Caco-2 (cell line): ENCODE measurements at regions of chr10 and their contacts with region 1.

Region 1: GRCh38 chr10:97928897-97929296 is 79.3 kb downstream of the GOLGA7B start:
- DNase-seq: no peak
- H3K4me3 ChIP-seq: no peak overlapping the region
- H3K4me3 Mint-ChIP-seq: no peak overlapping the region
- H3K27ac Mint-ChIP-seq: no peak overlapping the region
- H3K4me1 ChIP-seq: no peaks in the 10 kb centered on the region
- H3K4me1 Mint-ChIP-seq: no peaks in the 10 kb centered on the region
- H3K27me3 ChIP-seq: peaks cover 1% of the 10 kb centered on the region
- H3K27me3 Mint-ChIP-seq: peaks cover 43% of the 10 kb centered on the region
- CTCF ChIP-seq: no peak

Region 2: DNA sequence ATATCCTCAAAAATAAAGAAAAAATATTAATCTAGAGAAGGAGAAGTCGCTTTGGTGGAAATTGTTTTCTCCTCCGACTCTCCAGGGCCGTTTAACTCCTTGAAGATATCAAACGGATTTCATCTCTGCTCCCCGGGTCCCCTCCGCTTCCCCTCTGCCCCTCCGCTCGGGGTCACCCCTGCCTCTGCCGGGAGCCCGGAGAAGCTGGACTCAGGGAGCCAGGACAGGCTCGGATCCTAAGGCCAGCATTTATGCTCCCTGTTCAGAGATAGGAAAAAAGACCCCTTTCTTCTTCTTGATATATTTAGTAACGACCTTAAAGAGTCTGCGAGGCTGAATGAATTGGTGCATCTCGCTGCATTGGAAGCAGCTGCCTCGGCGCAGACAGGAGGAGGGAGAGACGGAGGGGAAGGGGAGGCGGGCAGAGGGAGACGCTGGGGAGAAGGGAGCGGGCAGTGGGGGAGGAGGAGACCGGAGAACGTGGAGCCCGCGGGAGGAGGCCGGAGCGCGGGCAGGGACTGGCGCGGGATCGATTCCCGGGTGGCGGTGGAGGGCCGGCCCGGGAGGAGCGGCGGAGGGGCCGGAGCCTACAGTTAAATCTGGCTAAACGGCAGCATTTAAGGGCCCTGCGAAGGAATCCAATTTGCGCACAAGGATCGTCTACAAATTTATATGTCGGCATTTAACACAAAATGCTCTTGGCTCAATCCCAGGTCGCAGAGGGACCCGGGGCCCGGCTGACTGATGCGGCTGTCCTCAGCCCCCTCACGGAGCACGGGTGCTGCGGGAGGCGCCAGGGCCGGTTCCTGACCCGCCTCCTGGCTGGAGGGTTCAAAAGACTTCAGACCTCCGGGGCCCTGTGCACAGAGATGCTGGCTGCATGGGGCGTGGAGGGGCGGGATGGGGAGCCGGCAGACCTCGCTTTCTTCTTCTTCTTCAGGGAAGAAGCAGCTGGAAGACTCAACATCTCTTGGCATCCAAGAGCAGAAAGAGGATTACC is 45.9 kb after region 1 on chr10:
- CTCF ChIA-PET with region 1: no interaction called
- POLR2A ChIA-PET with region 1: no interaction called
- intact Hi-C with region 1: loop called (anchors 1 kb)
- DNase-seq: no peak
- H3K4me3 ChIP-seq: no peak overlapping the region
- H3K4me3 Mint-ChIP-seq: no peak overlapping the region
- H3K27ac Mint-ChIP-seq: no peak overlapping the region
- H3K4me1 ChIP-seq: no peaks in the 10 kb centered on the region
- H3K4me1 Mint-ChIP-seq: no peaks in the 10 kb centered on the region
- H3K27me3 ChIP-seq: no peaks in the 10 kb centered on the region; the same call in 1 of the 2 replicates
- H3K27me3 Mint-ChIP-seq: peaks cover 45% of the 10 kb centered on the region
- CTCF ChIP-seq: no peak